ENCODE measurements at regions of chr14 and their contacts with region 1.

Region 1: GRCh38 chr14:69153131-69153872 is 383 bp upstream of the DCAF5 start:
- DNase-seq: peak; percentile 47
- H3K4me3 ChIP-seq: peak overlapping the region; percentile 84
- CTCF ChIP-seq: no peak

Region 2: DNA sequence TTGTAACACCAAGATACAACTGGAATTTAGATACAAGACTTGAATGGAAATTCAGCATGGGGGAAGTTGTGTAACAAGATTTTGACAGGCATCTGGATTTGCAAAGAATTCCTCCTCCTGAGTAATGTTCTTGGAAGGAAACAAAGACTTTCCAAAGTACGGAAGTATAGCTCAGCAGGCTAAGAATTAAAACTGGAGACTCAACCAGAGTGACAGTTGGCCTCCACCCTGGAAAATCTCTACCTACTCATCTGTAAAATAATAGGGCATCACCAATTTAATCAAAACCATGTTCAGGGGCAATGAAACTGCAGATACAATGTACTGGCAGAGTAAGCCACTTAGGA is 15.1 kb before region 1 on chr14:
- CTCF ChIA-PET with region 1: interaction called, 34 read pairs
- POLR2A ChIA-PET with region 1: interaction called, 4 read pairs
- DNase-seq: no peak
- H3K4me3 ChIP-seq: no peak overlapping the region
- CTCF ChIP-seq: no peak

Region 3: DNA sequence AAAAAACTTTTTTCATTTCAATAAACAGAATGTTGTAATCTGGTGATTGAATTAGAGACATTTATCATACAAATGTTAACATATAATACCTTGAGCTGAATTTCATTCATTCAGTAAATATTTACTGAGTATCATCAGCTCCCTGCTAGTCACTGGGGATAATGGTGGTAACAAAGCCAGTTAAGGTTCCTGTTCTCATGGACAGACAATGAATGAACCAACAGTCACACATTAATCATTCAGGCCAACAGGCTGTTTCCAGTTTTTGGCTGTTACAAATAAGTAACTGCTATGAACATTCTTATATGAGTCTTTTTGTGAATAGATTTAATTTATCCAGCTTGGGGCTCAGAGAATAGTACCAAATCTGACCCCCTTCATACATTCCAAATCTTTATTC is 51.5 kb after region 1 on chr14:
- CTCF ChIA-PET with region 1: no interaction called
- POLR2A ChIA-PET with region 1: no interaction called
- DNase-seq: no peak
- H3K4me3 ChIP-seq: no peak overlapping the region
- CTCF ChIP-seq: no peak

Region 4: DNA sequence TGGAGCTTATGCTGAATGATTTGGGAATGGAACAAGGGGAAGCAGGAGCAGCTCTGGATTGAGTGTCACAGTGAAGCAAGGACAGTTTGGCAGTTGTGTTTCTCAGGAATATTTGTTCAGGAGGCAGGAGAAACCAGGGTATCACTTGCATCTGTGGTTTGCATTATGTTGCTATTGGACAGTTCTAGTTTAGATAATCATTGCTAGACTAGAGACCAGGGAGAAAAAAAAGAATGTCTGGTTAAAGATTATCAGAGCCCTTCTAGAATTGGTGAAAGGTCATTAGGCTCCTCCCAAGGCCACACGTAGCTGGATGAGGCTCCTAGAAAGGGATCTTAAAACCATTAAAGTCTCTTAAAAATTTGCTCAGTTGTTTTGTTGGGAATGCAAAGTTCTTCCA is 596.7 kb after region 1 on chr14:
- CTCF ChIA-PET with region 1: no interaction called
- POLR2A ChIA-PET with region 1: no interaction called
- DNase-seq: no peak
- H3K4me3 ChIP-seq: no peak overlapping the region
- CTCF ChIP-seq: no peak